HepG2 (cell line): ENCODE measurements at regions of chr3 and their contacts with region 1.

Region 1: DNA sequence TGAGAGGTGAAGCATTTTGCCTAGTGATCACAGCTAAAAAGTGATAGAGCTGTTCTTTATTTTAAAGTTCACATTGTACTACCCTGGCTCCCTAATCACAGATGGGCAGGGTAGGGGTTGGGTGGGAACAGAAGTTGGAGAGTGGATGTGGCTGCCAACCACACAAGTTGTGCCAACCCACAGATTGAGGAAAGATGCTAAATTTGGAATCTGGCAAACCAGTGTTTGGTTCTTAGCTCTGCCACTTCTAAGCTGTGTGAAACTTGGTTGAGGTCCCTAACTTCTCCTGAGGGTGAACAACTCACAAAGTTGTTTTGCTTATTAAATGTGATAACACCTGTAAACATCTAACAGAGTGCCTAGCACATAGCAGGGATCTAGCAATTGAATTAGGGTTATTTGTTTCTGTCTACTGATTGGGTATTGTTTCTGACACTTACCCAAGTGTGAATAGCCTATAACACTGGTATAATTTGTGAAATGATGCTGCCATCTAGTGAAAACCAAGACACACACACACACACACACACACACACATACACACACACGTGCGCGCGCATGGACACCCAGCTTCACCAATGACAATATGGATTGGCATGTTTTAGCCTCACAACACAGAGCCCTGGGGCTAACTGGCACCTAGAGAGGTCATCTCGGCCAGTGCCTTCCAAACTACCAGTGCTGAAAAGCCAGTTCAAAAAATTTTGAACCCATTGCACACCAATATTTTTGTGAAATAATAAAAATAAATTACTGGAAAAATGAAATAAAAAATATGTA is 25.3 kb downstream of the ADGRG7 start:
- DNase-seq: peak; percentile 38
- ATAC-seq: peak; percentile 85
- H3K4me3 ChIP-seq: peak overlapping the region in 2 of 3 experiments; percentile 43 to 49; a peak in 1 of 6 replicates
- H3K27ac ChIP-seq: no peak overlapping the region
- H3K4me1 ChIP-seq: peaks cover 18% of the 10 kb centered on the region
- H3K27me3 ChIP-seq: no peaks in the 10 kb centered on the region
- CTCF ChIP-seq: peak; percentile 90
- EP300 ChIP-seq: no peak
- POLR2A ChIP-seq: no peak
- RAD21 ChIP-seq: peak; percentile 32; the same call in 1 of the 2 replicates

Region 2: GRCh38 chr3:100577382-100578002 is 57.2 kb before region 1 on chr3:
- CTCF ChIA-PET with region 1: no interaction called
- POLR2A ChIA-PET with region 1: no interaction called
- in situ Hi-C with region 1: no loop called
- intact Hi-C with region 1: no loop called
- DNase-seq: no peak
- ATAC-seq: no peak
- H3K4me3 ChIP-seq: no peak overlapping the region
- H3K27ac ChIP-seq: no peak overlapping the region
- H3K4me1 ChIP-seq: no peaks in the 10 kb centered on the region
- H3K27me3 ChIP-seq: no peaks in the 10 kb centered on the region
- CTCF ChIP-seq: no peak
- EP300 ChIP-seq: no peak
- POLR2A ChIP-seq: no peak
- RAD21 ChIP-seq: no peak

Region 3: GRCh38 chr3:100603469-100603868 is 31.2 kb before region 1 on chr3:
- CTCF ChIA-PET with region 1: no interaction called
- POLR2A ChIA-PET with region 1: no interaction called
- in situ Hi-C with region 1: no loop called
- intact Hi-C with region 1: loop called (anchors 1 kb)
- DNase-seq: peak; percentile 38
- ATAC-seq: peak; percentile 86
- H3K4me3 ChIP-seq: peak overlapping the region in 1 of 3 experiments; percentile 17; a peak in 1 of 6 replicates
- H3K27ac ChIP-seq: no peak overlapping the region
- H3K4me1 ChIP-seq: peaks cover 39% of the 10 kb centered on the region
- H3K27me3 ChIP-seq: no peaks in the 10 kb centered on the region
- CTCF ChIP-seq: peak; percentile 62
- EP300 ChIP-seq: no peak
- POLR2A ChIP-seq: no peak
- RAD21 ChIP-seq: no peak

Region 4: DNA sequence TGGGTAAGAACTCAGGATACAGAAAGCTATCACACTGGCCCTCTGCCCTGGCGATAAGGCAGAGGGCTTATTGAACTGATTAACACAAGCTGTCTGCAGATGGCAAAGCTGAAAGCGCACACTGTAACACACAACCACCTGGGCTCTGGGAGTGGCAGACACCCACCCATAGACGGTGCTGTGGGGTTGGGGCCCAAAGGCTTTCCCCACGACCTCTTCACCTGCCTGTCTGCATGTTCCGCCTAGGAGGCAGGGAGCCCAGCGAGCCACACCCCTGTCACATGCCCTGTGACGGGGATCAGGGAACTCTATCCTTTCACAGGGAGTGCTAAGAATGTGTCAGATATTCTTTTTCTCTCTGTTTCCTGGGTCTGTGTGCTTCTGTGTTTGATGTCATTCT is 62.5 kb after region 1 on chr3:
- CTCF ChIA-PET with region 1: no interaction called
- POLR2A ChIA-PET with region 1: no interaction called
- in situ Hi-C with region 1: no loop called
- intact Hi-C with region 1: loop called (anchors 10 kb)
- DNase-seq: no peak
- ATAC-seq: peak; percentile 74
- H3K4me3 ChIP-seq: no peak overlapping the region
- H3K27ac ChIP-seq: no peak overlapping the region
- H3K4me1 ChIP-seq: peaks cover 43% of the 10 kb centered on the region
- H3K27me3 ChIP-seq: peaks cover 0 to 2% of the 10 kb centered on the region in 2 experiments; a peak in 1 of 5 replicates
- CTCF ChIP-seq: 0 out of 2 replicates have a peak, but pooled peaks have one; percentile 5
- EP300 ChIP-seq: no peak
- POLR2A ChIP-seq: no peak
- RAD21 ChIP-seq: no peak